AG04449 (cell line): ENCODE measurements at regions of chr3 and their contacts with region 1.

Region 1: DNA sequence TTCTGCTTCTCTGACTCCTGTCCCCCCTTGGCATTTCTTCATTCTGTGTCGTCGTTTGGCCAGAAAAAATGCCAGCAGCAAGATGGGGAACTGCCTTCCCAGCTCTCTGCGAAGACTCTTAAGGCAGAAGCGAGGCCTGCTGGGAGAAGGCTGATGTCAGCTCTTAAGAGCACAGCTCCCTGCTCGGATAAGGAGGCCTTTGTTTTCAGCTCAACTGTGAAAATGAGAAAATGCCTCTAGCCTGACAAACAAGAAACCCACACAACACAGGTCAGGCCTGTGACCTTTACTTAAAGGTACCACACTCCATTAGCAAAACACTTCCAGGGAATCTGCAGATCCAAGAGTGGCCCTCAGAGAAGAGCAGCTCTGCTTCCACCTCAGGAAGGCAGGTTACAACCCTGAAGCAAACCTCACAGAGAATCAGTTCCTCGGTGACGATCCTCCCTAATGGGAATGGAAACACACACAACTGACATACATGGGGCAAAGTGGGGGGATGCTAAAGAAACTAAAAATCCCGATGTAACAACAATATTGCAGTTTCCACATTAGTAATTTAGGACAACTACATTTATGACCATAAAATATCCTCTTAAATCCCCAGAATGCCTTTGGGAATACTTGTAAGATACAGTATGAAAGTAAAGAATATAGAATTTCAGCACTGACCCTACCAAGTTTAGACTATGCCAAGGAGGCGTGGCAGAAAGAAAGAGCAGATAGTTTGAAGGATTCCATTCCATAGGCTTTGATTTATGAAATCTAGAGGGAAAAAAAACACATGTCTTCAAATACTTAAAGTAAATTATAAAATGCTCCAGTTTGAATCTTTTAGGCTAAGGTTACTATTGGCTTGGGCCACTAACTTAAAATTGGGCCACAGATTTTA is 52.1 kb downstream of the VGLL4 start:
- DNase-seq: no peak
- H3K4me3 ChIP-seq: no peak overlapping the region
- CTCF ChIP-seq: no peak

Region 2: DNA sequence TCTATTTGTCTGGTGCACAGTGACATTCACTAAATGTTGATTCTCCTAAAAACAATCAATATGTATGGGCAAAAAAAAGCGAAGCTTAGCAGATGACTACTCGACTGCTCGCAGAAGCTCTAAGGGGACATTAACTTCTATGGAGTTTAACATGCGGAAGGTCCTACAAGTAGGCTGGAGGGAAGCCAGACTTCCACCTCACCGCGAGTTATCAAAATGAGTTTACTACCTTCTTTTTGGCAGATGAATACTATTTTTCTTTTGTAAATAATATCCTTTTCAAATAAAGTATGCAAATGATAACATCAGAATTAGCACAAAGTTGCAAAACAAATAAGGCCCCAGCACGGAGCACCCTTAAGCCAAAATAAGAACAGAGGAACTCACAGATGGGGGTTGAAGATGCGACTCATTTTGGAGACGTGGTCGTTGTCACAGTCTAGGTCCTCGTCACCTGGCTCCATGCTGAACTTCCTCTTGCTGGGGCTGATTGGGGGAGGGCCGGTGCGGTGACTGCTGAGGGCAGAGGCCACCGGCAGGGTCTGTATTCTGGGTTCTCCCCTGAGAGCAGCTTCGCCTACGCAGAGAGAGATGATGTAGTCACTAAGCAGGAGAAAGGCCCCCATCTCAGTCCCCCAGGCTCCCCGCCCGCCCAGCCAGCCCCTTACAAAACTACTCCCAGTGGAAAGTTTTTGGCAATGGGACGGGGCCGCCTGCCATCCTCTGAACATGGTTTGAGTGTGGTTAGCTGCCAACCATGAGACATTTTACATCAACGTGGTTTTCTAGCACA is 10.0 kb after region 1 on chr3:
- CTCF ChIA-PET with region 1: interaction called, 4 read pairs
- POLR2A ChIA-PET with region 1: interaction called, 15 read pairs
- DNase-seq: no peak
- H3K4me3 ChIP-seq: no peak overlapping the region
- CTCF ChIP-seq: no peak